Tibial artery (tissue), 4 donors: ENCODE measurements at regions of chr20 and their contacts with region 1.

Region 1: DNA sequence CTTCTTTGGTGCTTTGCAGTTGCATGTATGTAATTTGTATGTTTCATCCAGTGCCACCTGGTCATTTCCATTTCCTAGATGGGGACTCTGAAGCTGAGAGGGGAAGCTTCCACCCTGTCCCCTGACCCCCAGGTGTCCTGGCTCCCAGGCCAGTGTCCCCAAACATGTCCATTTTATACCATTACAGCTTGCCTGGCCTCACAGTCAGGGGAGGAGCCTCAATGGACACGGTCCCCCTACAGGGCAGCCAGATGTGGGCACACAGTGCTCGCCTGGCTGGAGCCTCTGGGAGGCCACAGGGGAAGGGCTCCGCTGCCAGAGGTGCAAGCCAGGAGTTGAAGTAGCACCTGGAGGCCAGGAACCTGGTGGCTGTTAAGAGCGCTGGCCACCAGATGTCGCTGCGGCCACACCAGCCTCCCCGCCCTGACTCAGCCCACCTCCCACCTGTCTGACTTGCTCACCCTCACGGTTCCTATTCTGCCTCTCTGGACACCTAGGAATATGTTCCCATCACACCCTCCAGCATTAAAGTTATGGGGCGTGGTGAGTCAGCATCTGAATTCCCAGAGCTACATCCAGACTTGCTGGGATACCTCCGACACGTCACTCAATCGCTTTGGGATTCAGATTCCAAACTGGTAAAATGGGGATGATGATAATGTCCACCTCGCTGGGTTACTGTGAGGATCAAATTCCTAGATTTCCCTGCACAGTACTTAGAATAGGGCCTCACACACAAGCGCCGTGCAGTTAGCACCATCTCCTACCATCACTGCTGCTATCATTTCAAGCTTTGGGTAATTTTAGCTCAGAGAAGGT is 107.4 kb downstream of the SULF2 start:
- DNase-seq: no peak
- H3K4me3 ChIP-seq: no peak overlapping the region
- H3K27ac ChIP-seq: no peak overlapping the region
- H3K4me1 ChIP-seq: no peaks in the 10 kb centered on the region
- H3K27me3 ChIP-seq: no peaks in the 10 kb centered on the region
- CTCF ChIP-seq: peak; percentile 68 to 69

Region 2: GRCh38 chr20:47600967-47601547 is 76.8 kb before region 1 on chr20:
- intact Hi-C with region 1: no loop called
- DNase-seq: no peak
- H3K4me3 ChIP-seq: no peak overlapping the region
- H3K27ac ChIP-seq: no peak overlapping the region
- H3K4me1 ChIP-seq: peaks cover 0 to 21% (median 6%) of the 10 kb centered on the region in 4 donors
- H3K27me3 ChIP-seq: no peaks in the 10 kb centered on the region
- CTCF ChIP-seq: no peak

Region 3: DNA sequence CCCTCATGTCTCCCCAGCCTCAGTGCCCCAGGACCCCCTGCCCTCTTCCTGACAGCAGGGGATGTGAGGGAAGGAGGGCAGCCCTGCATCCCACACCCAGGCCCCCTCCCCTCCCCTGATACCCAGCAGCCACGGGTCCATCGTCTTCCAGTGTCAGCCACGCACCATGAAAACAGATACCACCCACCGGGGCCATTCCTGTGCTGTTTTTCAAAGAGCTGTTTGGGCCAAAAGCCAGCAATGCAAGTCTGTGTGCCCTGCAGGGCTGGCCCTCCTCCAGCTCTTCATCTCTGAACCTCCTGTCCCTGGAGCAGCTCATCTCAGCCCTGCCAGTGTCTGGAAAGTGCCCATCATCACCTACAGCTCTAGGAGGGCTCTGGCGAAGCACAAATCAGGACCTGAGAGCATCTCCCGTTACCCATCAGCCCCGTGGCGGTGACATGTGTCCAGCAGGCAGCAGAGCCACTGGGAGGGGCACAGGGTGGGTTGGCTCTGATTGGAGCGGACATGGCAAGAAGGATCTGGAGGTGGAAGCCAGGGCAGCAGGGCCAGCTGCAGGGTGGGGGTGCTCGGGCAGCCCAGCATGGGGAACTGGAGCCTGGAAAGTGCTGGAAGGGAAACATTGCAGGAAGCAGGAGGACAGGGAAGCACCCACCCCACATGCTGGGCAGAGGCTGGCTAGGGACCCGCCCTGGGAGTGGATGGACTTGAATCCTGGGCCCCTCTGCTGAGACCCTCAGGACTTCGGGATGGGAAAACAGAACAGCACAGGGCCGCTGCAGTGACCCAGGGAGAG is 941.8 kb after region 1 on chr20:
- intact Hi-C with region 1: loop called (anchors 5 kb)
- DNase-seq: no peak
- H3K4me3 ChIP-seq: no peak overlapping the region
- H3K27ac ChIP-seq: no peak overlapping the region
- H3K4me1 ChIP-seq: peaks cover 0 to 23% (median 18%) of the 10 kb centered on the region in 4 donors
- H3K27me3 ChIP-seq: no peaks in the 10 kb centered on the region
- CTCF ChIP-seq: no peak